Activated naive CD4-positive, alpha-beta T cell treated with anti-CD3 and anti-CD28 coated beads for 36 hours (primary cell): ENCODE measurements at regions of chr6 and their contacts with region 1.

Region 1: DNA sequence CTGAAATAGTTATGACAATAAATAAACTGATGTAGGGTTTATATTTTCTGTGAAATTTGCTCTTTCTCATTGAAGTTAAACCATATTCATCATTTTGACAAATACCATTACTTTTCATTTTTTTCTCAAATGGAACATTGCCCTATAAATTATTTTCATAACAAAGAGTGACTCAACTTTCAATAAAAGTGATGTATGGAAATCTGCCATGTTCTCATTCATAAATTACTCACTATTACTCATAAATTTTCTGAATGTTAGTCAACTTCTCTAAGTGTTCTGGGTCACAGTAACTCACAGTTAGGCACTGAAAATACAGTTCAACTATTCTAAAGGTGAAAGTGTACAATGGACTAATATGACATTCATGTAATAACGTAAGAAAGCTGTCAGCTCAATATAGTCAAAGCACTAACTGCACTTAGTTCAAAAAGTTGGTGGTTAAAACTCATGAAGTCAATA is 19.0 kb upstream of the STX11 start:
- DNase-seq: no peak
- H3K4me3 Mint-ChIP-seq: peak overlapping the region; percentile 57
- H3K27ac Mint-ChIP-seq: peak overlapping the region; percentile 92
- H3K4me1 Mint-ChIP-seq: peaks cover 52% of the 10 kb centered on the region
- H3K27me3 Mint-ChIP-seq: peaks cover 3% of the 10 kb centered on the region

Region 2: GRCh38 chr6:144104898-144105487 is 26.3 kb before region 1 on chr6:
- CTCF ChIA-PET with region 1: interaction called, 4 read pairs
- intact Hi-C with region 1: loop called (anchors 1 kb)
- DNase-seq: peak; percentile 48
- H3K4me3 Mint-ChIP-seq: no peak overlapping the region
- H3K27ac Mint-ChIP-seq: no peak overlapping the region
- H3K4me1 Mint-ChIP-seq: peaks cover 11% of the 10 kb centered on the region
- H3K27me3 Mint-ChIP-seq: no peaks in the 10 kb centered on the region

Region 3: DNA sequence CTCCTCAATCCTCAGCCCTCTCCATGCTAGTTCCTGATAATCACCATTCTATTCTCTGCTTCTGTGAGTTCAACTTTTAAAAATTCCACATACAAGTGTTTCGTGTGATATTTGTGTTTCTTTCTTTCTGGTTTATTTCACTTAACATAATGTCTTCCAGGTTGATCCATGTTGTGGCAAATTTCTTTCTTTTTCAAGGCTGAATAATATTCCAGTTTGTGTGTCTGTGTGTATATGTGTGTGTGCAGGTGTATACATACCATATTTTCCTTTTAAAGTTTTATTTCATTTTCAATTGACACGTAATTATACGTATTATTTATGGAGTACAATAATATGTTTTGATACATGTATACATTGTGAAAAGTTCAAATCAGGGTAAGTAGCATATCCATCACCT is 16.1 kb before region 1 on chr6:
- CTCF ChIA-PET with region 1: no interaction called
- intact Hi-C with region 1: no loop called
- DNase-seq: no peak
- H3K4me3 Mint-ChIP-seq: no peak overlapping the region
- H3K27ac Mint-ChIP-seq: no peak overlapping the region
- H3K4me1 Mint-ChIP-seq: no peaks in the 10 kb centered on the region
- H3K27me3 Mint-ChIP-seq: no peaks in the 10 kb centered on the region

Region 4: DNA sequence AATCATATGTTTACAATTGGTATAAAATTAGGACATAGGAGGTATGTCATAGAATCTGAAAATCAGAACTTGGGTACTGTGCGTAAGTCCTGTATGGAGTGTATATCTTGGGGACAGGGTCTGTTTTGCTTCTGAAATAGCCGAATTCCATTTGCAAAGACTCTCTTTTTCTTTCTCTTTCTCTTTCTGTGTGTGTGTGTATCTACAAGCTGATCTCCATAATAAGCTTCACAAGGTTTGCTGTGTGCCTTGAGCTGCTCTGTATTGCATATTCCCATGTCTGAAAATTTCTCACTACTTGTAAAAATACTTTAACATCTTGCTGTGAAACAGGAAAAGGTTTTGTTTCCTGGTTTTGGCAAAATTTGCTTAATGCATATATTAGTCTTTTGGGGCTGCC is 48.5 kb after region 1 on chr6:
- CTCF ChIA-PET with region 1: no interaction called
- intact Hi-C with region 1: loop called (anchors 1 kb)
- DNase-seq: no peak
- H3K4me3 Mint-ChIP-seq: no peak overlapping the region
- H3K27ac Mint-ChIP-seq: no peak overlapping the region
- H3K4me1 Mint-ChIP-seq: peaks cover 55% of the 10 kb centered on the region
- H3K27me3 Mint-ChIP-seq: no peaks in the 10 kb centered on the region

Region 5: GRCh38 chr6:144248476-144249301 is 117.4 kb after region 1 on chr6:
- CTCF ChIA-PET with region 1: no interaction called
- intact Hi-C with region 1: loop called (anchors 1 kb)
- DNase-seq: peak; percentile 9
- H3K4me3 Mint-ChIP-seq: no peak overlapping the region
- H3K27ac Mint-ChIP-seq: peak overlapping the region; percentile 32
- H3K4me1 Mint-ChIP-seq: peaks cover 16% of the 10 kb centered on the region
- H3K27me3 Mint-ChIP-seq: peaks cover 4% of the 10 kb centered on the region

Region 6: GRCh38 chr6:144469144-144469575 is 337.9 kb after region 1 on chr6:
- CTCF ChIA-PET with region 1: no interaction called
- intact Hi-C with region 1: loop called (anchors 1 kb)
- DNase-seq: peak; percentile 43
- H3K4me3 Mint-ChIP-seq: peak overlapping the region; percentile 42
- H3K27ac Mint-ChIP-seq: peak overlapping the region; percentile 46
- H3K4me1 Mint-ChIP-seq: peaks cover 20% of the 10 kb centered on the region
- H3K27me3 Mint-ChIP-seq: no peaks in the 10 kb centered on the region

Region 7: DNA sequence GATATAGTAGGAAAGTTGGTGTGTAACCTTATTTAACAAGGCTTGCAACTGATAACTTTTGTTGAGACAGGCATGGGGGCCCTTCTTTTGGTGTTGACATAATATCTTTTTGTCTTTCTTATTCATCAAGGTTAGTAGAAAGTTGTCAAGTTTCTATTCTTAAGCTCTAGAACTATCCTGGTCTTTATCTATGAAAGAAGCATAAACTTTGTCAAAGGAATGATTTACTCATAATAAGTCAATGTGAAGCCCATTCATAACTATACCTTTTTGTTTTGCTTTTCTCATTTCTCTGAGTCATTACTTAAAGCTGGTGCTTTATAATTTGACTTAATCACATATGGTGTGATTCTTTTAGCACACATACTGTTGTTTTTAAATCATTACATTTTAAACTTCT is 466.2 kb after region 1 on chr6:
- CTCF ChIA-PET with region 1: no interaction called
- intact Hi-C with region 1: loop called (anchors 1 kb)
- DNase-seq: peak; percentile 18
- H3K4me3 Mint-ChIP-seq: no peak overlapping the region
- H3K27ac Mint-ChIP-seq: no peak overlapping the region
- H3K4me1 Mint-ChIP-seq: peaks cover 41% of the 10 kb centered on the region
- H3K27me3 Mint-ChIP-seq: no peaks in the 10 kb centered on the region